ENCODE measurements at regions of chr11 and their contacts with region 1.

Region 1: DNA sequence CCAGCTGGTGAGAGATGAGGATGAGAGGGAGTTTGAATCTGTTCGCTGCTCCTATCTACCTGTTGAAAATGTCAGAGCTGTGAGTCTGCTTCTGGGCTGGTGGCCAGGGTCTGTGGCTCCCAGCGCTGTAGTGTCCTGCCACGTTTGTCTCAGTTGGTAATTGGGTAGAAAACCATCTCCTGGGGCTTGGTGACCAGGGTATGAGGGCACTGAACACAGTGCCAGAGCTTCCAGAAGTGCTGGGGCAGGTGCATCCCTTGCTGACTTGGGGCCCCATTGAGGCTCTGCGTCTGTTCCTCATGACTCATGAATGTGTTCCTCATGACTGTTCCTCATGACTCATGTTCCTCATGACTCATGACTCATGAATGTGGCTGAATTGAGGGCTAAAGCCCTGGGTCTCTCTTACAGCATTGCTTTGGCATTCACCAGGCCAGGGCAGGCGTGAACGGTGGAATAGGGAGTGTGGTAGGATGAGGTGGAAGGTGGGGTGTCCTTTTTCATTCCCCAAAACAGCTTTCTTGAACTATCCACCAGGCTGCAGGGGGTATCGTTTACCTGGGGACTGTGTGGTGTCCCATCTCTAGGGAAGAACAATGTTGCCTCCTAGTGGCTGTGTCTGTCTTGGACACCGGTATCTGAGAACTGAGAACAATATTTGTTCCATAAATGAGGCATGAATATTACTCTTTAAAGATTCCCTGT is 139.5 kb downstream of the COMMD9 start:
- DNase-seq: peak; percentile 22
- H3K4me3 Mint-ChIP-seq: no peak overlapping the region
- H3K27ac Mint-ChIP-seq: no peak overlapping the region
- H3K4me1 Mint-ChIP-seq: peaks cover 14% of the 10 kb centered on the region
- H3K27me3 Mint-ChIP-seq: peaks cover 2% of the 10 kb centered on the region

Region 2: DNA sequence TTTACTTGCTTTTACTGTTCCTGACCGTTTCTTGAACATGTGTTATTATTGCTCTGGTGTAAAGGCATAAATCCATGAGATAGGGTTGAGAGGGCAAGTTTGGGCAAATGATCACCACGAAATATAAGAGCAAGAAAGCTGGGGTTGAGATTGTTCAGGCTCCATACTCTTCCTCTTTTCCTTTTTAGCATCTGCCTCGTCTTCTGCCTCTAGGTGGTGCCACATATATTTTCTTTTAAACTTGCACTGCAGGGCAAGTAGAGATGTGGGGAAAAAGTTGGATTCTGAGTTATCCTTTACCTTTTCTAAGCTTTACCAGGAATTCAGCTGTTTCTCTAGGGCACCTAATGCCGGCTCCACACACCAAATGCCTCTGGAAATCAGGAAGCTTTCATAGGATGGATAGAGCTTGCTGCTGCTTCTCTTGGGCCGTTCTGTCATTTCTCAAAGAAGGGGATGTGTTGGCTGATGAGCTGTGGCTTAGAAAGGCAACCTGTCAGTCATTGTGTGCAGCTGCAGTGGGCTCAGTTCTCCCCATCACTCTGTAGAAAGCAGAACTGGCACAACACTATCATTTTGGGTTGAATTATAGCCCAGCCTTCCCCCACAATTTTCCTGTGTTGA is 107.6 kb before region 1 on chr11:
- intact Hi-C with region 1: loop called (anchors 5 kb)
- DNase-seq: no peak
- H3K4me3 Mint-ChIP-seq: no peak overlapping the region
- H3K27ac Mint-ChIP-seq: no peak overlapping the region
- H3K4me1 Mint-ChIP-seq: peaks cover 7% of the 10 kb centered on the region
- H3K27me3 Mint-ChIP-seq: peaks cover 5% of the 10 kb centered on the region

Region 3: DNA sequence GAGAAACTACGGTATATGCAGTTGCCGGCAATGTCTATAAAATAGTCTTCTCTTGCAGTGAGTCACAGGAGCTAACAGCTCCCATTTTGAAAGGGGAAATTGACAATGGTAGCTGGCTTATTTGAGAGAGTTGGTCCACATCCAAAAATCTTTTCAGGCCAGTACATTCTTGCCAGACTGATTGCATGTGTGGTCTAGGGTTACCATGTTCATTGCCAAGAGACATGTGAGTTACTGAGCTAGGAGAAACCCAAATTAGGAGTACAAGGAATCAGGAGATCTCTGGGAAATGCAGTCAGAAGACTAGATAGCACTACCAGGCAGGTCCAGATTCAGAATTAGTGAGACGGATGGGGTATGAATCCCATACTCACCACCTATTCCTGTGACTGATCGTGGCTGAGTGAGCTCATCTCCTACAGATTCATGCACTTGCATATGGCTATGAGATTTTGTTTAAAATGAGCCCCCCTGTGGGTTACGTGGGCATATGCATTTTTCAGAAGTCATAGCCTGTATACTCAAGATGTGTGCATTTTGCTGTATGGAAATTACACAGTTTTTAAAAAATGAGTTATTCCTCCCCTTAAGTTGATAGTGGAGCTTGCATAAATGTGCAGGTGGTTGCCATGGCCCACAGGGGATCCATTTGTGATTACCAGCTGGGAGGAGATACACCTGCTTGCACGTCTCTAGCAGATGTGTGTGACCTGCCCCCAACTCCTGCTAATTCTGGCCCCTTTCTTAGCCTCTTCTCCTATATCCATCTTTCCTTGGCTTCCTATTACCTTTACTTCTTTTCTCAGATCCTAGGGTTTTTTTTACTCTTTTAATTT is 36.9 kb after region 1 on chr11:
- intact Hi-C with region 1: no loop called
- DNase-seq: no peak
- H3K4me3 Mint-ChIP-seq: no peak overlapping the region
- H3K27ac Mint-ChIP-seq: no peak overlapping the region
- H3K4me1 Mint-ChIP-seq: no peaks in the 10 kb centered on the region
- H3K27me3 Mint-ChIP-seq: no peaks in the 10 kb centered on the region